Adrenal gland (tissue), 19 donors: ENCODE measurements at regions of chr7 and their contacts with region 1.

Region 1: DNA sequence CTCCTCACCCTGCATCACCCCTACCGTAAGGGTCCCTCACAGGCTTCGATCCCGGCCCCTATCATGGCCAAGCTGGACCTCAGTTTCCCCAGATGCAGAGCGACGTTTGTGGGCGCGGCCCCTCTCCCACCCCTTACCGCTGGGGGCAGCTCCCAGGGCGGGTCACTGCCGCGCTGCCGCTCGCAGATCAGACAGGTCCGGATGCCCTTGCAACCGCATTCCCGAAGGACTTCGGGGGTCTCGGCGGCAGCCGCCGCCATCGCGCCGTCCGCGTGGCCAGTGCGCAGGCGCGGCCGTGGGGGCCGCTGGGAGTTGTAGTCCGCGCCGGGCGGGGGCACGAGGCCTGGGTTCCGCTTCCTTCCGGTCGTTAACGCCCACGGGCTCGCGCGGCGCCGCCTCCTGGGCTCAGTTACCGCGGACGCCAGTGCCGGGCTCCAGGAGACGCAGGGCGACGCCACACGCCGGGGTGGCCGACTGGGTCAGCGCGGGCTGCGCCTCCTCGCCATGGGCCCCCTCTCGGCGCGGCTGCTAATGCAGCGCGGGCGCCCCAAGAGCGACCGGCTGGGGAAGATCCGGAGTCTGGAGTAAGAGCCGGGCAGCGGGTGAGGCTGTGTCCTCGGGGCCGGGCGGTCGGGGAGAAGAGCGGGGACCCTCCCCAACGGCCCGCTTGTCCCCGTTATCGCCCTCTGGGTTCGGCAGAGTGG is at the starts of genes ALKBH4 and LRWD1:
- DNase-seq: peak; percentile 93 to 97 (median 94)
- H3K4me3 ChIP-seq: peak within 1 kb of the TSS; percentile 53 to 87 (median 78)
- H3K27ac ChIP-seq: peak within 1 kb of the TSS in 3 of 5 donors; percentile 23 to 42 (median 35)
- H3K4me1 ChIP-seq: peaks cover 27 to 33% of the 10 kb centered on the region in 2 donors
- H3K27me3 ChIP-seq: no peaks in the 10 kb centered on the region
- CTCF ChIP-seq: peak in 2 of 6 experiments; percentile 29
- POLR2A ChIP-seq: peak in 1 of 2 donors; percentile 77
- total RNA-seq, gene ALKBH4: 12.1 to 37.4 (median 12.8) TPM
- total RNA-seq, gene LRWD1: 13.0 to 48.9 (median 24.9) TPM

Region 2: GRCh38 chr7:102106625-102107024 is 358.1 kb before region 1 on chr7:
- intact Hi-C with region 1: no loop called
- DNase-seq: peak in 2 of 7 donors; percentile 8 to 15
- H3K4me3 ChIP-seq: no peak overlapping the region
- H3K27ac ChIP-seq: no peak overlapping the region
- H3K4me1 ChIP-seq: no peaks in the 10 kb centered on the region
- H3K27me3 ChIP-seq: no peaks in the 10 kb centered on the region
- CTCF ChIP-seq: no peak
- POLR2A ChIP-seq: no peak

Region 3: DNA sequence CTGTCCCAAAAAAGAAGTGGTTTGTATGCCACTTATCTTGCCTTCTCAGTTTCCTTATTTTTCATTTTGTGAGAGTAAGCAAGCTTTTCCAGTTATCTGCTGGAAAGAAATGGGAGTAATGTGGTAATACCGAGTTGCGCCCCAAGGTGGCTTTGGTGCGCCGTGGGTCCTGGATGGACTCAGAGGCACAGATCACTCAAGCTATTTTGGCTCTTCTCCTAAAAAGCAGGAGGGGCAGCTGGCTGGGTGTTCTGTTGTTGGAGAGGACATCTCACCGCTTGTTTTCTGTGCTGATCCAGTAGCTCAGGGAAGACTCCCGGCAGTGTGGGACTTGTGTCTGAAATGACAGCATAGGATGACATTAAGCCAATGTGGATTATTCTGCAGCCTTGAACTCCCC is 52.2 kb before region 1 on chr7:
- intact Hi-C with region 1: loop called in 1 of 2 experiments (anchors 10 kb)
- DNase-seq: peak; percentile 57 to 90 (median 80)
- H3K4me3 ChIP-seq: no peak overlapping the region
- H3K27ac ChIP-seq: peak overlapping the region in 2 of 5 donors; percentile 20 to 24
- H3K4me1 ChIP-seq: peaks cover 6 to 20% of the 10 kb centered on the region in 2 donors
- H3K27me3 ChIP-seq: no peaks in the 10 kb centered on the region
- CTCF ChIP-seq: peak; percentile 47 to 73 (median 70)
- POLR2A ChIP-seq: no peak